ENCODE measurements at regions of chr1 and their contacts with region 1.

Region 1: DNA sequence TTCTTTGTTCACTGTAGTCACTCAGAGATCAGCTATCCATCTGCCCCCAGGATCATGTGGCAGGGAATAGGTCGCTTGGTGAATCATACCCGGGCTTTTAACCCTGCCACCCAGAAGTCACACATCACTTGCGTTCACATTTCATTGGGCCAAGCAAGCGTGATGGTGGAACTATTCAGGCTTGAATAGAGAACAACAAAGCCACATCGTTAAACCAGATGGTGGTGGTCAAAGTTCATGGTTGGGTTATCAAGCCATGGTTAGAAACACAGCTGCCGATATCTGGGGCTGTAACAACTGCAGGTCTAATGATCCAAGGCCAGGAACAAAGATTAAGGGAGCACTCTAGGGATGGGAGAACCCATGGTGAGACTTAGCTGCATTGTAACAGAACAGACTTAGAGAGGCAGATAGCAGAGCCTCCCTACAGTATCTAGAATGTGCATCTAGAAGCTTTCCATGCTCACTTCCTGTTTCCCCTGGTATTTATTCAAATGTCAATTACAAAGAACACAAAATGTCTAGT is 40.0 kb upstream of the PTPRC start:
- DNase-seq: peak; percentile 40
- ATAC-seq: peak; percentile 76
- H3K4me3 Mint-ChIP-seq: peak overlapping the region; percentile 90
- H3K27ac Mint-ChIP-seq: peak overlapping the region; percentile 99
- H3K4me1 Mint-ChIP-seq: peaks cover 90% of the 10 kb centered on the region
- H3K27me3 Mint-ChIP-seq: no peaks in the 10 kb centered on the region
- CTCF ChIP-seq: no peak

Region 2: DNA sequence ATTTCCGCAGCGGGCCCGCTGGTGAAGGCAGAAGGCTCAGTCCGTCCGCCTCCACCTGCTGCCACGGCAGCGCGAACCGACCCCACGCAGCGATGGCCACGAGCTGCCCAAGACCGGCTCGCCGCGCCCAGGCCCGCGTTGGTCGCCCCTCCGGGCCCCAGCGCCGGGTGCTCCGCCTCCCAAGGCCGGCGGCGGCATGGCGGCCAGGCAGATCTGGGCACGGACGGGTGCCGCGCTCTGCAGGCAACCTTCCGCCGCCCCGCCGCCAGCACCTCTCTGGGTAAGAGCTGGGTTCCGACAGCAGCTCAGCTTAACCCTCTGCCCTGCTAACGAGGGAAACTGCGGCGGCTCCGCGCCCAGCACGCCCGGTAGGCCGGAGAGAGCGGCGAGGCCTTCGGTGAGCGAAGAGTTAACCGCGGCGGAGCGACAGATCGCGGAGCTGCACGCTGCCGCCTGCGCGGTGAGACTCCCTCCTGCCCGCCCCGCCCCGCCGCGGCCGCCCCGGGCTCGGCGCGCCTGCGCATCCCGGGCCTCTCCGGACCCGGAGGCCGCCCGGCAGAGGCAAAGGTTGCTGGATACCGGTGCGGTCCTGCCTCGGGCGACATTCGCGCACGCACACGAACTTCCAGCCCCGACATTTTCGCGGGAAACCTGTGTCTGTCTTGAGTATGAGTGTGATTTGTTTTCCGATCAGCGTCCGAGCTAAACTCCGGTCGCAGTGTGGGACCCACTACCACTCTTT is 696.2 kb before region 1 on chr1 and contains the start of gene C1orf53:
- CTCF ChIA-PET with region 1: no interaction called
- POLR2A ChIA-PET with region 1: no interaction called
- intact Hi-C with region 1: loop called (anchors 5 kb)
- DNase-seq: peak; percentile 83
- ATAC-seq: peak; percentile 92
- H3K4me3 Mint-ChIP-seq: peak within 1 kb of the TSS; percentile 90
- H3K27ac Mint-ChIP-seq: peak within 1 kb of the TSS; percentile 67
- H3K4me1 Mint-ChIP-seq: peaks cover 14% of the 10 kb centered on the region
- H3K27me3 Mint-ChIP-seq: peaks cover 41% of the 10 kb centered on the region
- CTCF ChIP-seq: no peak
- total RNA-seq, gene C1orf53: 0.81 and 1.2 TPM in 2 replicates

Region 3: GRCh38 chr1:198333744-198334143 is 265.1 kb before region 1 on chr1:
- CTCF ChIA-PET with region 1: no interaction called
- POLR2A ChIA-PET with region 1: no interaction called
- intact Hi-C with region 1: no loop called
- DNase-seq: no peak
- ATAC-seq: no peak
- H3K4me3 Mint-ChIP-seq: no peak overlapping the region
- H3K27ac Mint-ChIP-seq: no peak overlapping the region
- H3K4me1 Mint-ChIP-seq: no peaks in the 10 kb centered on the region
- H3K27me3 Mint-ChIP-seq: peaks cover 11% of the 10 kb centered on the region
- CTCF ChIP-seq: no peak

Region 4: GRCh38 chr1:198520524-198521254 is 78.2 kb before region 1 on chr1:
- CTCF ChIA-PET with region 1: interaction called, 3 read pairs
- POLR2A ChIA-PET with region 1: interaction called, 14 read pairs
- intact Hi-C with region 1: loop called (anchors 2 kb)
- DNase-seq: no peak
- ATAC-seq: peak; percentile 70
- H3K4me3 Mint-ChIP-seq: peak overlapping the region; percentile 69
- H3K27ac Mint-ChIP-seq: peak overlapping the region; percentile 81
- H3K4me1 Mint-ChIP-seq: peaks cover 63% of the 10 kb centered on the region
- H3K27me3 Mint-ChIP-seq: no peaks in the 10 kb centered on the region
- CTCF ChIP-seq: no peak

Region 5: GRCh38 chr1:198556971-198557370 is 41.9 kb before region 1 on chr1:
- CTCF ChIA-PET with region 1: interaction called, 4 read pairs
- POLR2A ChIA-PET with region 1: interaction called, 8 read pairs
- intact Hi-C with region 1: loop called (anchors 1 kb)
- DNase-seq: peak; percentile 26
- ATAC-seq: peak; percentile 93
- H3K4me3 Mint-ChIP-seq: peak overlapping the region; percentile 52
- H3K27ac Mint-ChIP-seq: peak overlapping the region; percentile 72
- H3K4me1 Mint-ChIP-seq: peaks cover 58% of the 10 kb centered on the region
- H3K27me3 Mint-ChIP-seq: no peaks in the 10 kb centered on the region
- CTCF ChIP-seq: no peak

Region 6: DNA sequence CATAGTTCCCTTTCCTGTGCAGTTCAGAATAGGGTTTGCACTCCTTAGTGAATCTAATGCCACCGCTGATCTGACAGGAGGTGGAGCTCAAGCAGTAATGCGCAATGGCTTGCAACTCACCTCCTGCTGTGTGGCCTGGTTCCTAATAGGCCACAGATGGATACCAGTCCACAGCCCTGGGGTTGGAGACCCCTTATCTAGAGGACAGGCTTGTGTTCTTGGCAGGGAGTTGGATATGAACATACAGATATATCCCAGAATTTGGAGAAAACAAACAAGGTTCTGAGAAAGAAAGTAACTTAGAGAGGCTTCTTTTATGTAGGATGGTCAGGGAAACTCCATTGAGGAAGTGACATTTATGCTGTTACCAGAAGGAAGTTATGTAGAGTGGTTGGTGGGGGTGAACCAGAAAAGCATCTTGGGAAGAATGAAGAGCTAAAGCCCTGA is 34.8 kb after region 1 on chr1:
- CTCF ChIA-PET with region 1: interaction called, 4 read pairs
- POLR2A ChIA-PET with region 1: interaction called, 40 read pairs
- intact Hi-C with region 1: loop called (anchors 1 kb)
- DNase-seq: peak; percentile 27
- ATAC-seq: peak; percentile 87
- H3K4me3 Mint-ChIP-seq: peak overlapping the region; percentile 9
- H3K27ac Mint-ChIP-seq: peak overlapping the region; percentile 80
- H3K4me1 Mint-ChIP-seq: peaks cover 95% of the 10 kb centered on the region
- H3K27me3 Mint-ChIP-seq: no peaks in the 10 kb centered on the region
- CTCF ChIP-seq: no peak

Region 7: DNA sequence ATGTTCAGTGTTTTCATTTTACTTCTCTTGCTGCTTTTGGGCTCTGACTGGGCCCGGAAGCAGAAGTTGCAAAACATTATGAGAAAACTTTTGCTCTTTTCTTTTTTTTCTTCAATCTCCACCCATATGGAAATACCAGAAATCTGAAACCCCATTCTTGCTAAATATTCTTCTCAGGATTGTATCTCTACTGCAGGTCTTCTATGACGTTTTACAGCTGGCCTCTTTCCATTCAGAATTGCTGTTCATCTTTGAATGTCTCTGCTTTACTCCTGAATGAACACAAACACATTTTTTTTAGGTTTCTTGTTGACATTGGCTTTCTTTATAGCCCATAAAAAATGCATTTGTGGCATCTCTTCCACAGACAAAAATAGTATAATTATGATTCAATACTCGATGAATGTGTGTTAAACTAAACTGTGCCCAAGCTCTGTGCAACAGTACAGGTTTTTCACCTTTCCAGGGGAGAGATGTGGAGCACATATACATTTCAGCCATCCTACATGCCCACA is 58.7 kb after region 1 on chr1:
- CTCF ChIA-PET with region 1: no interaction called
- POLR2A ChIA-PET with region 1: interaction called, 13 read pairs
- intact Hi-C with region 1: no loop called
- DNase-seq: no peak
- ATAC-seq: peak; percentile 57
- H3K4me3 Mint-ChIP-seq: peak overlapping the region; percentile 56
- H3K27ac Mint-ChIP-seq: peak overlapping the region; percentile 84
- H3K4me1 Mint-ChIP-seq: peaks cover 78% of the 10 kb centered on the region
- H3K27me3 Mint-ChIP-seq: no peaks in the 10 kb centered on the region
- CTCF ChIP-seq: no peak

Region 8: DNA sequence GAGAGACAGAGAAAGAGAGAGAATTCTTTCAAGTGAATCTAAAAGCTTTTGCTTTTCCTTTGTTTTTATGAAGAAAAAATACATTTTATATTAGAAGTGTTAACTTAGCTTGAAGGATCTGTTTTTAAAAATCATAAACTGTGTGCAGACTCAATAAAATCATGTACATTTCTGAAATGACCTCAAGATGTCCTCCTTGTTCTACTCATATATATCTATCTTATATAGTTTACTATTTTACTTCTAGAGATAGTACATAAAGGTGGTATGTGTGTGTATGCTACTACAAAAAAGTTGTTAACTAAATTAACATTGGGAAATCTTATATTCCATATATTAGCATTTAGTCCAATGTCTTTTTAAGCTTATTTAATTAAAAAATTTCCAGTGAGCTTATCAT is 157.6 kb after region 1 on chr1:
- CTCF ChIA-PET with region 1: no interaction called
- POLR2A ChIA-PET with region 1: no interaction called
- intact Hi-C with region 1: no loop called
- DNase-seq: no peak
- ATAC-seq: no peak
- H3K4me3 Mint-ChIP-seq: no peak overlapping the region
- H3K27ac Mint-ChIP-seq: peak overlapping the region; percentile 0
- H3K4me1 Mint-ChIP-seq: peaks cover 30% of the 10 kb centered on the region
- H3K27me3 Mint-ChIP-seq: no peaks in the 10 kb centered on the region
- CTCF ChIP-seq: no peak